Activated naive CD4-positive, alpha-beta T cell treated with anti-CD3 and anti-CD28 coated beads for 36 hours (primary cell): ENCODE measurements at regions of chr13 and their contacts with region 1.

Region 1: GRCh38 chr13:41456768-41457588 is at the start of gene RGCC:
- DNase-seq: peak; percentile 94
- H3K4me3 Mint-ChIP-seq: peak within 1 kb of the TSS; percentile 85
- H3K27ac Mint-ChIP-seq: peak within 1 kb of the TSS; percentile 96
- H3K4me1 Mint-ChIP-seq: peaks cover 26% of the 10 kb centered on the region
- H3K27me3 Mint-ChIP-seq: peaks cover 8% of the 10 kb centered on the region
- total RNA-seq, gene RGCC: 75.0 to 77.8 TPM

Region 2: DNA sequence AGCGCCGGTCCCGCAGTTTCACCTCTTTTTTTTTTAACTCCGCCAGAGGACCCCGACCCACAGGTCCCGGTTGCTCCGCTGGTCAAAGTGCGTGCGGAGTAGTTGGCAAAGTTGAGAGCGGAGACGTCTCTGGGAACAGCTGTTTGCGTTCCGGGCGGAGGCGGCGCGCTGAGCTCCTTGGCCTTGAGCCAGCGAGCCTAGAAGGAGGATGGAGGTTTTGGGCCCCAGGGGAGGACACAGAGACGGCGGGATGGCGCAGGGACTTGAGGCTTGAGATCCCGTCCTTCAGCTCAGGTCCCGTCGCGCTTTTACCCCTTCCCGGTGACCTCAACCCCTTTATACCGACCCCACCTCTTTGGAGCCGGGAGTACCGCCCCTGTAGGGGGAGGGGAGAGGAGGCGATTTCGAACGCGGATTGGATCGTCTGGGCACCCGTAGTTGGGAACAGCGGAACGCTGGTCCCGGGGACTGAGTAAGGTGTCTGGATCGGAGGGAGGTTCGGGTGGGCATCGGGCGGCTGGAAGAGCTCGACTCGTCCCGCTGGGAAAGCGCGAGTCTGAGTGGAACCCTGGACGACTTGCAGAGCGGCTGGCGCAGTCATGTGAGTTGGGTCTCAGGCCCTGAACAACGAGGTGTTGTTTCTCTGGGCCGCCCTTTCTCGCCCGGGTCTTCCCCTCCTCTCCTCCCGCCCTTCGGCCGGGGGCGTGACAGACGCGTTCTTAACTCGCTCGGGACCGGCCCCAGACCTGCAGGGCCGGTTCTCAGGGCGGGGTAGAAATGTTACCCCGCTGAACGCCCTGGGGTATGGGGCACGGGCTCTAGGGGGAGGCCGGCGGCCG is 395.7 kb before region 1 on chr13 and contains the start of gene WBP4:
- CTCF ChIA-PET with region 1: no interaction called
- intact Hi-C with region 1: loop called (anchors 2 kb)
- DNase-seq: peak; percentile 88
- H3K4me3 Mint-ChIP-seq: peak within 1 kb of the TSS; percentile 95
- H3K27ac Mint-ChIP-seq: peak within 1 kb of the TSS; percentile 98
- H3K4me1 Mint-ChIP-seq: peaks cover 45% of the 10 kb centered on the region
- H3K27me3 Mint-ChIP-seq: peaks cover 4% of the 10 kb centered on the region
- total RNA-seq, gene WBP4: 8.1 to 8.2 TPM

Region 3: DNA sequence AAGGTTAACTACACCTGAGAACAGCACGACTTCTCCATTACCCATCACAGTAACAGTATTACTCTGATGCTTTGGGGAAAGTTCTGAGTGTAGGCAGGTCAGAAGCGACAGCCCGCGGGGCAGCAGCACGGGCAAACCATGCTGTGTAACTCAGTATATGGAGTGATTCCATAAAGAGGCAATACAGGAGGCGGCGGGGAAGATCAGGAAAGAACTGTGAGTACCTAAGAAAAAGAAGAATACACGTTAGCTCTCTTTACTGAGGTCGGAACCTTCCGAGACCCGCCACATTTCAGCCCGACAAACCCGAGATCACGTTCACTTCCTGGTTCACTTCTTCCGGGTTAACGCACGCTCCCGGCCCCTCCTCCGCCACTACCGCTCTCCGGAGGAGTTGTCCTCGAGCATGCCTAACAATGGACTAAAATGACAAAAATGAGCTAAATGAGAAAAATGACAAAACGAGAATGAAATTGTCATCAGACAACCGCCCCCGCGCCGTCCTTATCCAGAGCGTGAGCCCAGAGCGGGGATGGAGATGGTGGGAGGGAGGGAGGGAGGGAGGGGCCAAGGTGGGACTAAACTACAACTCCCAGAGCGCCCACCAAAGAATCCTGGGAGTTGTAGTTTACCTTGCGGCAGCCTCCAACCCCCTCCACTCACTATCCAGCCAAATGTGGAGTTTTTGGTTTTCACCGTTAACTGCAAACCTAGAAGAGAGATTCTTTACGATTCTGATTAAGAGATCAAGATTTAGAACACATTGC is 193.5 kb before region 1 on chr13 and contains the start of gene MTRF1:
- CTCF ChIA-PET with region 1: interaction called, 3 read pairs
- intact Hi-C with region 1: loop called (anchors 2 kb)
- DNase-seq: peak; percentile 84
- H3K4me3 Mint-ChIP-seq: peak within 1 kb of the TSS; percentile 90
- H3K27ac Mint-ChIP-seq: peak within 1 kb of the TSS; percentile 95
- H3K4me1 Mint-ChIP-seq: peaks cover 24% of the 10 kb centered on the region
- H3K27me3 Mint-ChIP-seq: no peaks in the 10 kb centered on the region
- total RNA-seq, gene MTRF1: 23.2 to 28.4 TPM

Region 4: GRCh38 chr13:41352935-41353840 is 103.8 kb before region 1 on chr13:
- CTCF ChIA-PET with region 1: no interaction called
- intact Hi-C with region 1: loop called (anchors 1 kb)
- DNase-seq: peak; percentile 69
- H3K4me3 Mint-ChIP-seq: no peak overlapping the region
- H3K27ac Mint-ChIP-seq: peak overlapping the region; percentile 77
- H3K4me1 Mint-ChIP-seq: peaks cover 57% of the 10 kb centered on the region
- H3K27me3 Mint-ChIP-seq: no peaks in the 10 kb centered on the region

Region 5: GRCh38 chr13:41443966-41444365 is 13.0 kb before region 1 on chr13:
- CTCF ChIA-PET with region 1: no interaction called
- intact Hi-C with region 1: no loop called
- DNase-seq: no peak
- H3K4me3 Mint-ChIP-seq: no peak overlapping the region
- H3K27ac Mint-ChIP-seq: no peak overlapping the region
- H3K4me1 Mint-ChIP-seq: peaks cover 3% of the 10 kb centered on the region
- H3K27me3 Mint-ChIP-seq: no peaks in the 10 kb centered on the region

Region 6: GRCh38 chr13:41502673-41503072 is 45.7 kb after region 1 on chr13:
- CTCF ChIA-PET with region 1: interaction called, 38 read pairs
- intact Hi-C with region 1: no loop called
- DNase-seq: peak; percentile 53
- H3K4me3 Mint-ChIP-seq: no peak overlapping the region
- H3K27ac Mint-ChIP-seq: no peak overlapping the region
- H3K4me1 Mint-ChIP-seq: peaks cover 65% of the 10 kb centered on the region
- H3K27me3 Mint-ChIP-seq: no peaks in the 10 kb centered on the region

Region 7: GRCh38 chr13:41588899-41589298 is 131.9 kb after region 1 on chr13:
- CTCF ChIA-PET with region 1: interaction called, 20 read pairs
- intact Hi-C with region 1: loop called (anchors 5 kb)
- DNase-seq: peak; percentile 57
- H3K4me3 Mint-ChIP-seq: no peak overlapping the region
- H3K27ac Mint-ChIP-seq: no peak overlapping the region
- H3K4me1 Mint-ChIP-seq: peaks cover 11% of the 10 kb centered on the region
- H3K27me3 Mint-ChIP-seq: no peaks in the 10 kb centered on the region

Region 8: GRCh38 chr13:41960639-41961465 is 503.9 kb after region 1 on chr13 and contains the start of gene VWA8:
- CTCF ChIA-PET with region 1: no interaction called
- intact Hi-C with region 1: loop called (anchors 5 kb)
- DNase-seq: peak; percentile 84
- H3K4me3 Mint-ChIP-seq: peak within 1 kb of the TSS; percentile 95
- H3K27ac Mint-ChIP-seq: peak within 1 kb of the TSS; percentile 92
- H3K4me1 Mint-ChIP-seq: peaks cover 53% of the 10 kb centered on the region
- H3K27me3 Mint-ChIP-seq: no peaks in the 10 kb centered on the region
- total RNA-seq, gene VWA8: 21.2 to 21.5 TPM

Region 9: GRCh38 chr13:42686165-42686564 is 1229.2 kb after region 1 on chr13:
- CTCF ChIA-PET with region 1: no interaction called
- intact Hi-C with region 1: no loop called
- DNase-seq: no peak
- H3K4me3 Mint-ChIP-seq: no peak overlapping the region
- H3K27ac Mint-ChIP-seq: no peak overlapping the region
- H3K4me1 Mint-ChIP-seq: no peaks in the 10 kb centered on the region
- H3K27me3 Mint-ChIP-seq: peaks cover 8% of the 10 kb centered on the region